Activated T-helper 1 cell treated with anti-CD3 and anti-CD28 coated beads, Interleukin-12 subunit alpha, Interleukin-12 subunit beta, Interleukin-2, Interleukin-4 antibody, amounts not matched to agents 30 ng/mL and 10 ng/mL and 1 ng/mL, durations not matched to agents 14 hours and 24 hours and 36 hours (primary cell): ENCODE measurements at regions of chr4 and their contacts with region 1.

Region 1: DNA sequence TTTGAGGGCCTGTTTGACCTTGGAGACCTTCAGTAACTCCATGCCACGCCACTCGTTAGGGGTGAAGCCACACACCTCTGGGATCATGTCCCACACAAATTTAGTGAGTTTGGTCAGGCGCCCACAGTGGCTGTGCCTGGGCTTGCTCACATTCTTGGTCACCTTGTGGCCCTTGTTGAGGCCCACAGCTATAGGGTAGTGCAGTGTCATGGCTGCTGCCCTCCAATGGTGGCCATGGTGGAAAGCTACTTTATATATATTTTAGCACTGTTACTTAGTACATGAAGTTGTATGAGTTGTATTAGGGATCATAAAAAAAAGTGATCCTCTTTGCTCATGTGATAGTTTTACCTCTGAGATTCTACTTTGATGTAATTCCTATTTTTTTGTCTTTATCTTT is 985 bp upstream of the CXCL11 start:
- DNase-seq: no peak
- H3K4me3 Mint-ChIP-seq: no peak overlapping the region
- H3K27ac Mint-ChIP-seq: no peak overlapping the region
- H3K4me1 Mint-ChIP-seq: peaks cover 21% of the 10 kb centered on the region
- H3K27me3 Mint-ChIP-seq: no peaks in the 10 kb centered on the region

Region 2: GRCh38 chr4:76024065-76024464 is 12.8 kb before region 1 on chr4:
- intact Hi-C with region 1: loop called (anchors 1 kb)
- DNase-seq: no peak
- H3K4me3 Mint-ChIP-seq: peak overlapping the region; percentile 4
- H3K27ac Mint-ChIP-seq: peak overlapping the region; percentile 24
- H3K4me1 Mint-ChIP-seq: peaks cover 46% of the 10 kb centered on the region
- H3K27me3 Mint-ChIP-seq: no peaks in the 10 kb centered on the region